ENCODE measurements at regions of chr4 and their contacts with region 1.

Region 1: GRCh38 chr4:61374447-61374891 is 174.3 kb downstream of the ADGRL3 start:
- DNase-seq: no peak
- H3K4me3 ChIP-seq: no peak overlapping the region
- H3K4me3 Mint-ChIP-seq: peak overlapping the region; percentile 83
- H3K27ac Mint-ChIP-seq: no peak overlapping the region
- H3K4me1 ChIP-seq: peaks cover 8% of the 10 kb centered on the region; the same call in 1 of the 2 replicates
- H3K4me1 Mint-ChIP-seq: peaks cover 5% of the 10 kb centered on the region
- H3K27me3 ChIP-seq: no peaks in the 10 kb centered on the region
- H3K27me3 Mint-ChIP-seq: no peaks in the 10 kb centered on the region
- CTCF ChIP-seq: no peak

Region 2: DNA sequence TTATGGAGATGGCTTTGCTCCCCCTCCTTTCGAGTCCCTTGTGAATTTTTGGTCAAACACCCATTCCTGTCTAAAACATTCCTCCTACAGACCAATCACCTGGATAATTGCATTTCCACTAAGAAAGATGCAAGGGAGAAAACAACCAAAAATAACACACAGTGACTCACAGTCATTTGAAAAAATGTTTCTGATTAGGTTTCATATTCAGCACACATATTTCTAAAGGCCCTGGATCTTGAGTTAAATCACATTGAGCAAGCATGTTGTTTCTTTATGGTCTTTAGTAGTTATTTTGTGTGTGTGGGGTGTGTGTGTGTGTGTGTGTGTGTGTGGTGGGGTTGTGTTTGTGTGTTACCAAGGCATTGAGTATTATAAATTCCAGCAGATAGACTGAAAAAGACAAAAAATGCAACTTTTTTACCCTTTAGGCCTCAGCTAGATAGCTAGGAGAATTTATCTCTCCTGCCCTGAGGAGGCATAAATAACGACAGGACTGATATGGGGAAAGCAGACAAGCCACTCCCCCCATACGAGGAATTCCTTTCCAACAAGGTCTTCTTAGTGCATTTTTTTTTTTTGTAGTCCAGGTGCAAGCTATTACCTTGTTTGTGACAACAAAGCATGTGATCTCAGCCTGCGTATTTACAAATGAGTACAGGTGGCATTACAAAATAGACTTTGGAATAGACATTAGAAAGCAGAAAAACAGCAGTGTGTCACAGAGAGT is 439.7 kb before region 1 on chr4:
- CTCF ChIA-PET with region 1: no interaction called
- POLR2A ChIA-PET with region 1: no interaction called
- intact Hi-C with region 1: loop called (anchors 10 kb)
- DNase-seq: peak; percentile 60 to 71
- H3K4me3 ChIP-seq: no peak overlapping the region
- H3K4me3 Mint-ChIP-seq: peak overlapping the region; percentile 30
- H3K27ac Mint-ChIP-seq: peak overlapping the region; percentile 81
- H3K4me1 ChIP-seq: peaks cover 25% of the 10 kb centered on the region
- H3K4me1 Mint-ChIP-seq: peaks cover 9% of the 10 kb centered on the region
- H3K27me3 ChIP-seq: no peaks in the 10 kb centered on the region
- H3K27me3 Mint-ChIP-seq: no peaks in the 10 kb centered on the region
- CTCF ChIP-seq: no peak

Region 3: DNA sequence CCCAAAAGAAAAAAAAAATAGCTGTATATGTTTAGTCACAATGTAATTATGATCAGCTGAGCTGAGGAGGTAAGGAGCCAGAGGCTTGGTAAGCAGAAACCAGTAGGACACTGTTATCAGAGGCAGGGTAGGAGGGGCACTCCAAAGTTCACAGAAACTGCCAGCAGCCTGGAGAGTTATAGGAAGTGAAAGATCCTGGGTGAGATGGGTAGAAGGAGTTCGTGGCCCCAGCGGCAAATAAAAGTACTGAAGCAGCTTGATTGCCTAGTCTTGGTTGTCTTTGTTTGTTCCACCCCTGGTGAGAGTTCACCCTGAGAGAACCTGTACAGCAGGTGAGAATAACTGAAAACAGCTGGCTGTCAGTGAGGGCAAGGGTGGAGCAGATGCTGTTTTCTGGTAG is 166.5 kb after region 1 on chr4:
- CTCF ChIA-PET with region 1: no interaction called
- POLR2A ChIA-PET with region 1: no interaction called
- intact Hi-C with region 1: loop called (anchors 5 kb)
- DNase-seq: peak; percentile 87 to 90
- H3K4me3 ChIP-seq: no peak overlapping the region
- H3K4me3 Mint-ChIP-seq: peak overlapping the region; percentile 64
- H3K27ac Mint-ChIP-seq: peak overlapping the region; percentile 89
- H3K4me1 ChIP-seq: peaks cover 20% of the 10 kb centered on the region
- H3K4me1 Mint-ChIP-seq: peaks cover 25% of the 10 kb centered on the region
- H3K27me3 ChIP-seq: no peaks in the 10 kb centered on the region
- H3K27me3 Mint-ChIP-seq: no peaks in the 10 kb centered on the region
- CTCF ChIP-seq: peak in 1 of 2 experiments; percentile 19